ENCODE measurements at regions of chr2 and their contacts with region 1.

Region 1: GRCh38 chr2:130156624-130157004 is 11.7 kb upstream of the CCDC74B start:
- DNase-seq: no peak
- ATAC-seq: no peak
- H3K4me3 Mint-ChIP-seq: no peak overlapping the region
- H3K27ac Mint-ChIP-seq: no peak overlapping the region
- H3K4me1 Mint-ChIP-seq: no peaks in the 10 kb centered on the region
- H3K27me3 Mint-ChIP-seq: no peaks in the 10 kb centered on the region

Region 2: DNA sequence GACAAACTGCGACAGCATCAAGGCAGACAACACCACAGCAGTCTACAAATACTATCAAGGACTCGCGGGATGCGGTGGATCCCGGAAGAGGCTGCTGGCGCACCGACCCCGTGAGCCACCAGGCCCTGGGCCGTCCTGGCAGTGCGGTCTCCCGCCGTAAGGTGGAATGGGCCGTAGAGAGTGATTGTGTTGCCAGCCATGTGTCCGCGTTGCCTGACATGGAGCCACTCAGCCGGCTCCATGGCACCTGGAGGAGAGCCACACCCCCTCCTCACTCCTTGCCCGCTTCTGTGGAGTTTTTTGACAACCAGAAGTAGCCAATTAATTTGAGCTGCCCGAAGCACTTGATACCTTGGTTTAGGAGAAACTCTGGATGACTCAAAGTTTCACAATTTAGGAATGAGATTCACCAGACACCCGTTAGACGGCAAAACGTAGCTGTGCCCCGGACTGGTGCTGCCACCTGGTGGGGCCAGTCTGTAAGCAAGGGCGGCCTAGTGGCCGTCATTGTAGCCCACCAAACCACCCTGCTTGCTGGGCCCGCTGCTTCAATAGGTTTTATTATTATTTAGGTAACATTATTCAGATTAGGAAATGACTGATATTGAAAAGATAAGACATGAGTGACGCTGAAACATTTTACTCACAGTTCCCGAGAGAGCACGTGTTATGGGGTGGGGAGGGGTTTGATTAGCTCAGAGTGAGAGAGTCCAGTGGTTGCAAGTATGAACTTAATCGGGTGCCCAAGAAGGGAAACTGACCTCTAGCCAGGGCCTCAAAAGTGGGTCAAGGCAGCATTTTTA is 175.9 kb after region 1 on chr2:
- CTCF ChIA-PET with region 1: interaction called, 3 read pairs
- POLR2A ChIA-PET with region 1: interaction called, 4 read pairs
- intact Hi-C with region 1: loop called in 1 of 2 experiments (anchors 1 kb)
- DNase-seq: peak; percentile 84
- ATAC-seq: peak; percentile 82
- H3K4me3 Mint-ChIP-seq: peak overlapping the region; percentile 26
- H3K27ac Mint-ChIP-seq: no peak overlapping the region
- H3K4me1 Mint-ChIP-seq: peaks cover 14% of the 10 kb centered on the region
- H3K27me3 Mint-ChIP-seq: peaks cover 25% of the 10 kb centered on the region